Head of caudate nucleus (tissue), 42 donors: ENCODE measurements at regions of chr11 and their contacts with region 1.

Region 1: GRCh38 chr11:19903620-19904069 is 191.0 kb downstream of the NAV2 start:
- DNase-seq: peak; percentile 46 to 93 (median 82)

Region 2: GRCh38 chr11:19561011-19561410 is 342.6 kb before region 1 on chr11:
- intact Hi-C with region 1: loop called (anchors 5 kb)
- DNase-seq: no peak

Region 3: GRCh38 chr11:19742588-19743292 is 160.9 kb before region 1 on chr11:
- intact Hi-C with region 1: loop called (anchors 10 kb)
- DNase-seq: peak; percentile 45 to 92 (median 86)

Region 4: DNA sequence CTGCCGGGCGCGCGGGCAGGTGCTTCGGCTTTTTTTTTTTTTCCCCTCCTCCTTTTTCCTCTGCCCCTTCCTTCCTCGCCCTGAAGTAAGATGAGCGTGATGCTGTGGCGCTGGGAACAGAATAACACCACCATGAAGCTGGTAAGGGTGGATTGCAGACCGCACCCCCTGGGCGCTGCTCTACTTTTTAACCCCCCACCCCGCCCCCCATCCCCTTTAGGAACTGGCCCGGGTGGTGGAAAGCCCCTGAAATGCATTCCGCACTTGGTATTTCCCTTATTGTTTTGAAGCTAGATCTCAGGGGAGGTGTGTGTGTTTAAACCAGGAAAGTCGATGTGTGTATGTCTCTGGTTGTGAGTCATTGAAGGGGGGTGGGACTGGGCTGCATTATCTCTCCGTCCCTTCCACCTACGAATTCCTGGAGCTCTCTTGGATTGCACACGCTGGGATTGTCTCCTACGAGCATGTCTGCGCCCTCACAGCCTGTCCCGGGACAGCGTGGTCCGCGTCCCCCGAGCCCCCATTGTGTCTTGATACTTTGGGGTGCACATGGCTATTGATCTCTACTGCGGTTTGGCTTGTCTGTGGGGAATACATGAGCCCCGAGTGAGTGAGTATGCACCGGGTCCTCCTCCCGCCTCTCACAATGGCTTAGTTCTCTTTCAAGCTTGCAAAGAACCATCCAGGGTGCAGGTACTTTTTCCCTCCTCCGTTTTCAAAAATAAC is 126.1 kb before region 1 on chr11:
- intact Hi-C with region 1: no loop called
- DNase-seq: peak in 7 of 42 donors; percentile 17 to 51 (median 29)

Region 5: DNA sequence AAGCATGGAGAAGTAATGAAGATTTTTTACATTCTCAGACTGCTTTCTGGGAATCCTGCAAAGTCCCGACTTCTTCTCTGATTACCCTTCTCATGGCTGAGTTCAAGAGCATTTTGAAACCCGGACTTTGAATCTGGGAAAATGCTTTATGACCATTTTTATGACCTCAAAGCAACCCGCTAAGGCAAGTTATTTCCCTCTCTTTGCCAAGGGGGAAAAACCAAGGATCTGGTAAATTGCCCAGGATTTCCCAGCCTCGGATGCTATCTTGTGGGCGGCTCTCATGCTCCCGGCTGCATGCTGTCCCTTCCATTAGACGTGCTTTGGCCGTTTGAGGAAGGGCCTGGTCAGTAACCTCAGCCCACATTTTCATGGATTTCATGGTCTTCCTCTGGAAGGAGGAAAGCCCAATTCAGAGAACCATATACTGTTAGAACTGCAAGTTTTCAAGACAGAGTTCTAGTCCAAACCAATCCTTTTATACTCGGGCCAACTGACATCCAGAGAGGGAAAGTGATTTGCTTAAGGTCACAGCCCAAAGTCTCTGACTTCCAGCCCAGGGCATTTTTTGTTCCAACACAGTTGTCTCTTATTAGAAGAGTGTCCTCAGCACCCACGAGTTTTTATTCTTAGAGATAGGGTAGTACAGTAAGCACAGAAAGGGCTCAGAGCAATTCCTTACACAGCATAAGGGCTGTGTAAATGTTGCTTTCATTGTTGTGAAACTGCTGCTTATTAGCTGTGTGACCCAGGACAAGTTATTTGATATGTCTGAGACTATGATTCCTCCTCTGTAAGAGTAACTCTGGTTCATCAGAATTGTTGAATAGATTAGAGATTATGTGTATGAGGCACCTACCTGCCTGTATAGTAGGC is 113.6 kb before region 1 on chr11:
- intact Hi-C with region 1: no loop called
- DNase-seq: no peak

Region 6: GRCh38 chr11:19814421-19814820 is 89.2 kb before region 1 on chr11:
- intact Hi-C with region 1: loop called (anchors 5 kb)
- DNase-seq: peak in 1 of 42 donors; percentile 31

Region 7: DNA sequence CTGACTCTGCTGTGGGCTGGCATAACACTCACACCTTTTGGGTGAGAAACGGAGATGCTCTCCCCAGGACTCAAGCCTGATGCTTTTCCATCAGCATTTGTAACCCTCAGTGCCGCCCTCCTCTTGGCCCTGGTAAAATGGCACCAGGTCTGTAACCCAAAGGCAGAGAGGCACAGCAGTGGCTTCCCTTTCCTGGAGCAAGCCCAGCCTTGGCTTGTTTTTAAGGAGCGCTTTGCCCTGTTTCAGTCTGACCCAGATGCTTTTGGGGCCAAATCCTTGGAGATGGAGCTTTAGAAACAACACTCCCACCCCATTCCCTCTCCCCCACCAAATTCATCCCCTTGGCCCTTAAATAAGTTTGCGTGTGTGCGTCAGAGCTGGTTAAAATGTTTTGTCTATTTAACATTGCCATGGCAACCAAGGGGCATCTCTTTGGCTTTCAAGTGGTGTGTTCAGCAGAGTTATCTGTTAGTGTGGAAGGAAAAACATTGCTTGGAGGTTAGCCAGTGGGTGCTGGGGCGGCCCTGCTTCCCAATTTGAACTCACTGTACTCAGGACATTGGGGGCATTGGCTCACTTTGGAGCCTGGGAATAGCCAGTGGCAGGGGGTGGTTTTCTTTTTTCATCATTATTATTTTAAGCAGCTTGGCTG is 56.9 kb before region 1 on chr11:
- intact Hi-C with region 1: no loop called
- DNase-seq: peak in 11 of 42 donors; percentile 21 to 63 (median 41)

Region 8: GRCh38 chr11:20451568-20451967 is 547.9 kb after region 1 on chr11:
- intact Hi-C with region 1: no loop called
- DNase-seq: no peak